HepG2 (cell line): ENCODE measurements at regions of chr7 and their contacts with region 1.

Region 1: DNA sequence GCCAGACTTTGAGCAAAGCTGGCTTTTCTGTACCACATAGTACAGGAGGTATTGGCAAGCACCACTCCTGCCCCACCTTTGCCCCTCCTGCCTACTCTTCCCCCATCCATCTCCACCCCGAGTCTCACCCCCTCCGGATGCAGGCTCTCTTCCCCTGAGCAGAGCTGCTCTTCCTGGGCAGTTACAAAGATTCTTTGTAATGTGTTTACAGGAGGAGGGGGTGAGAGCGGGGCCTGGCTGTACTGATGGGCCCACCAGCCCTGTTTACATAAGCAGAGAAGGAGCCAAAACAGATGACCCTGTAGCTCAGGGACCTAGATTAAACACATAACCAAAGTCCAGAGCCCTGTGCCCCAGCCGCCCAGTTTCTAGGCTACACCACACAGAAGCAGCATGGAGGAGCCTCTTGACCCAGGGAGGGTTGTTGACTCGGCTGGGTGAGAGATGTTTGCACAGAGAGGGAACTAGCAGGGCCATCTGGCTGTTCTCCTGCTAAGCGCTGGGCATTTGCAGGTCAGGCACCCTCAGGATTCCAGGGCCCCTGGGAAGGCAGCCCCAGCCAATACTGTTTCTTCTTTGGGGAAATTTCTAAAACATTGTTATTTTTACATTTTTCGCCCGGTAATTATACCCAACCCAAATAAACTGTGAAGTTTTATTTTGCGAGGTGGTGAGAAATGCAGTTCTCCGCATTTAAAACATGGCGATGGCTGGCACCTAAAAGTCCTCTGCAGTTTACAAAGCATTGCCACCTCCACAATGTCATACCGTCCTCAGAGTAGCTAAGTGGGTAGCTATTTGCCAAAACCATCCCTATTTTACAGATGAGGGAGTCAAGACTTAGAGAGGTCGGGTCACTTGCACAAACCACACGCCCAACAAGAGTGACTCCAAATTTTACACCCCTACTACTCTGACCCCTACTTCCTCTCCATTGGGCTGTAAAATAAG is 11.4 kb upstream of the ZKSCAN1 start:
- DNase-seq: peak; percentile 99
- ATAC-seq: peak; percentile 96
- H3K4me3 ChIP-seq: peak overlapping the region in 1 of 3 experiments; percentile 12; a peak in 1 of 6 replicates
- H3K27ac ChIP-seq: peak overlapping the region; percentile 96
- H3K4me1 ChIP-seq: peaks cover 97% of the 10 kb centered on the region
- H3K27me3 ChIP-seq: no peaks in the 10 kb centered on the region
- CTCF ChIP-seq: peak; percentile 35; the same call in 1 of the 2 replicates
- EP300 ChIP-seq: peak; percentile 74 to 98; a peak in 3 of 4 replicates
- POLR2A ChIP-seq: 0 out of 4 replicates have a peak, but pooled peaks of 1 of the 2 experiments have one; percentile 18
- RAD21 ChIP-seq: peak; percentile 75

Region 2: GRCh38 chr7:99910976-99911375 is 93.0 kb before region 1 on chr7:
- CTCF ChIA-PET with region 1: no interaction called
- POLR2A ChIA-PET with region 1: no interaction called
- in situ Hi-C with region 1: no loop called
- intact Hi-C with region 1: no loop called
- DNase-seq: no peak
- ATAC-seq: no peak
- H3K4me3 ChIP-seq: no peak overlapping the region
- H3K27ac ChIP-seq: no peak overlapping the region
- H3K4me1 ChIP-seq: no peaks in the 10 kb centered on the region
- H3K27me3 ChIP-seq: no peaks in the 10 kb centered on the region
- CTCF ChIP-seq: no peak
- EP300 ChIP-seq: no peak
- POLR2A ChIP-seq: no peak
- RAD21 ChIP-seq: no peak

Region 3: DNA sequence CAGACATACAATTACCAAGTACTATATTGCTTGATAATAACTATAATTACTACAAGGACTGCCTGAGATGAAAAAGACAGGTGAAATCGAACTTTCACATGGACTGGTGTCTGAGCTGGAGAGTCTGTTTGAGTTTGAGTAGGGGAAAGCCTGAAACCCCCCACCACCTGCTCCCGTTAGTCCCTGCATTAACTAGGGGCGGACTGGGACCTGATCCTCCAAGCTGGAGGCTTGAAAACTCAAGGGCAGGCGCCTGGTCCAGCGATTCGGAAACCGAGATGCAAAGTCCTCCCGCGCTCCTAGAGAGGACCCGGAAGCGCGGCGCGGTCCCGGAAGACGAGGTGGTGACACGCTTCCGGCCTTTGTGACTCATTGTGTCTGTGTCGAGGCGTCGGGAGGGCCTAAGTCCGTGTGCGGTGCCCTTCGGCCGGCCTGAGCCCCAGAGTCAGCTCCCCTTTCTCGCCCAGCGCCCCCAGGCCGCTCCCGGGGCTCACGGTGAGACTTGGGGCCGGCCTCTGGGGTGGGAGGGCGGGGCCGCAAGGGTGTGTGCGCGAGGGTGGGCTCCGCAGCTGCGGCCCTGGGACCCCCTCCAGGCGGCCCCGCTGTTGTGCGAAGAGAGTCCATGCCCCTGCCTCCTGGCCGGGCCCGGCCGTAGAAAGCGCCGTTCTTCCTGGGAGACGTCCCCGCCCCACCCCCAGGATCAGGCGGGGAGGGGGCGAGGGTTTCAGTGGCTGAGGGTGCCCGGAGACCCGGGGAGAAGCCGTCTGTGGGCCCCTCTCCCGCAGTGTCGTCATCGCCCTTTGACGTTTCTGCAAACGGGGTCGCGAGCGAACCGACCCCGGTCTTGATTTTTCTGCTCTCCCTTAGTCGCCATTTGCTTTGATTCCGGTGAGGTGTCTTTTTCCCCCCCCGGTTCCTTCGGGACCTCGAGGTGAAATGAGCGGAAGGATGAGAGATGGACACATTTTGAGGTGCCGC is 11.5 kb after region 1 on chr7 and contains the start of gene ZKSCAN1:
- CTCF ChIA-PET with region 1: no interaction called
- POLR2A ChIA-PET with region 1: interaction called, 212 read pairs
- in situ Hi-C with region 1: no loop called
- intact Hi-C with region 1: loop called (anchors 1 kb)
- DNase-seq: peak; percentile 91
- ATAC-seq: peak; percentile 94
- H3K4me3 ChIP-seq: peak within 1 kb of the TSS; percentile 92 to 94 (median 93)
- H3K27ac ChIP-seq: peak within 1 kb of the TSS; percentile 93
- H3K4me1 ChIP-seq: peaks cover 82% of the 10 kb centered on the region
- H3K27me3 ChIP-seq: no peaks in the 10 kb centered on the region; a peak in 1 of 5 replicates
- CTCF ChIP-seq: peak; percentile 12; the same call in 1 of the 2 replicates
- EP300 ChIP-seq: no peak
- POLR2A ChIP-seq: peak; percentile 85 to 91
- RAD21 ChIP-seq: no peak
- total RNA-seq, gene ZKSCAN1: 60.6 and 64.5 TPM in 2 replicates

Region 4: GRCh38 chr7:100022665-100023064 is 18.7 kb after region 1 on chr7:
- CTCF ChIA-PET with region 1: no interaction called
- POLR2A ChIA-PET with region 1: interaction called, 212 read pairs
- in situ Hi-C with region 1: no loop called
- intact Hi-C with region 1: no loop called
- DNase-seq: peak; percentile 63
- ATAC-seq: peak; percentile 63
- H3K4me3 ChIP-seq: no peak overlapping the region
- H3K27ac ChIP-seq: peak overlapping the region; percentile 28
- H3K4me1 ChIP-seq: peaks cover 78% of the 10 kb centered on the region
- H3K27me3 ChIP-seq: no peaks in the 10 kb centered on the region
- CTCF ChIP-seq: no peak
- EP300 ChIP-seq: peak in 1 of 2 experiments; percentile 27; a peak in 1 of 4 replicates
- POLR2A ChIP-seq: no peak
- RAD21 ChIP-seq: no peak

Region 5: DNA sequence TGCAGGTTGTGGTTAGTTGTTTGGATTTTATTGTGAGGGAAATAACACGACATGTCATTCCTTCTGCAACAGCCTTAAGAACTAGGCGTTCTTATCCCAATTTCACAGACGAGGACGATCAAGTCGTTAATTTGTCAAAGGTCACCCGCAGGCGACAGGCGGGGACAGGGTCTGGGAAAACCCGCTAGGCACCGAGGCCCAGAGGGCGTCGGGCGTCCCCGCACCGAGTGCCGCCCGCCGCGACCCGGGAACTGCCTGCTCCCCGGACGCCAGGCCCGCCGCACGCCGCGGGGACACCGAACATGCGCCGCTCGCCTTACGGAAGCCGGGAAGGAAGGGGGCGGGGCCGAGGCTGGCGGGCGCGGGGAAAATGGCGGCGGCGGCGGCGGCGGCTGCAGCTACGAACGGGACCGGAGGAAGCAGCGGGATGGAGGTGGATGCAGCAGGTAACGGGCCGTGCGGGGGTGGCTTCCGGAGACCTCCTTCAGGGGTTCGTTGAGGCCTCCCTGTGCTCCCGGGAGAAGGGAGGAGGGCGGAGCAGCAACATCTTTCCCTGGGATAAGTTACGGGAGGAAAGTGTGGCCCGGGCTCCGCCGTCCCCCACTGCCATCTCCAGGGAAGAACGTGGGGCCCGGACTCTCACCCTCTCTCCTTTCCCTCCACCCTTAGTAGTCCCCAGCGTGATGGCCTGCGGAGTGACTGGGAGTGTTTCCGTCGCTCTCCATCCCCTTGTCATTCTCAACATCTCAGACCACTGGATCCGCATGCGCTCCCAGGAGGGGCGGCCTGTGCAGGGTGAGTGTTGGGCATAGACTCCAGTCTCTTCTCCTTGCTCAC is 84.9 kb after region 1 on chr7 and contains the start of gene COPS6:
- CTCF ChIA-PET with region 1: no interaction called
- POLR2A ChIA-PET with region 1: no interaction called
- in situ Hi-C with region 1: no loop called
- intact Hi-C with region 1: no loop called
- DNase-seq: peak; percentile 49
- ATAC-seq: peak; percentile 58
- H3K4me3 ChIP-seq: peak within 1 kb of the TSS; percentile 83 to 97 (median 84)
- H3K27ac ChIP-seq: peak within 1 kb of the TSS; percentile 74
- H3K4me1 ChIP-seq: peaks cover 36% of the 10 kb centered on the region
- H3K27me3 ChIP-seq: no peaks in the 10 kb centered on the region; a peak in 1 of 5 replicates
- CTCF ChIP-seq: no peak
- EP300 ChIP-seq: no peak
- POLR2A ChIP-seq: peak; percentile 78 to 93
- RAD21 ChIP-seq: peak; percentile 50; the same call in 1 of the 2 replicates
- total RNA-seq, gene COPS6: 33.4 and 64.4 TPM in 2 replicates